Calu3 (cell line): ENCODE measurements at regions of chr5 and their contacts with region 1.

Region 1: DNA sequence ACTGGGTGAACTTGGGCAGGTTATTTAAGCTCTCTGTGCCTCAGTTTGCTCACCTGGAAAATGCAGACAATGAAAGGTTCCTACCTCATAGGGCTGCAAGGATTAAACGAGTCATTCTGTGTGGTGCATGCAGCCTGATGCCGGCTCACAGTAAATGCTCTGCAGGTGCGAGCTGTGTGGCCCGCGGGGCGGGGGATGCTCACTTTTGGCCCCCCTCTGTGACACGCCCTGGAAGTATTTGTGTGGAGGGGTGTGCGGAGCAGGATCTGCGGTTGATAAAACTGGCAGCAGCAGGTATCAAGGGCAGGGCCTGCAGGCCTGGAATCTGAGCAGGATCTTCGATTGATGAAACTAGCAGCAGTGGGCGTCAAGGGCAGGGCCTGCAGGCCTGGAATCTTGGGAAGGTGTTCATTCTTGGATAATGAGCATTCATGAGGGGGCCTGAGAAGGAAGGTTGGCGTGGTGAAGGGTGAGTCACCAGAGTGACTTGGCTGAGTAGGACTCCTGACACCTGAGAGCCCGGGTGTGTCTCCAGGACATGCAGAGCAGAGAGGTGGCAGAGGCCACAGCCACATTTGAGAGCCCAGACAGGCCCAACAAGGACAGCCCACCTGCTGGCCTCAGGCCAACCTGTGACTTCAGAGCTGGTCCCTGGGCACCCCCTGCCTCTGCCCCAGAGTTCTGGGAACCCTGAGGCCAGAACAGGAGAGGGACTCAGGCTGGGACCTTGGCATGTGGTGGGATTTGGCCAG is 11.9 kb downstream of the UNC5A start:
- DNase-seq: peak; percentile 95
- H3K4me3 Mint-ChIP-seq: peak overlapping the region; percentile 86
- H3K27ac Mint-ChIP-seq: peak overlapping the region; percentile 97
- H3K4me1 Mint-ChIP-seq: peaks cover 77% of the 10 kb centered on the region
- H3K27me3 Mint-ChIP-seq: no peaks in the 10 kb centered on the region
- CTCF ChIP-seq: no peak

Region 2: GRCh38 chr5:176810084-176810597 is 12.1 kb before region 1 on chr5 and contains the start of gene UNC5A:
- CTCF ChIA-PET with region 1: interaction called, 18 read pairs
- intact Hi-C with region 1: no loop called
- DNase-seq: peak; percentile 90
- H3K4me3 Mint-ChIP-seq: peak within 1 kb of the TSS; percentile 79
- H3K27ac Mint-ChIP-seq: peak within 1 kb of the TSS; percentile 43
- H3K4me1 Mint-ChIP-seq: peaks cover 42% of the 10 kb centered on the region
- H3K27me3 Mint-ChIP-seq: no peaks in the 10 kb centered on the region
- CTCF ChIP-seq: no peak
- total RNA-seq, gene UNC5A: 19.5 and 20.2 TPM in 2 replicates

Region 3: DNA sequence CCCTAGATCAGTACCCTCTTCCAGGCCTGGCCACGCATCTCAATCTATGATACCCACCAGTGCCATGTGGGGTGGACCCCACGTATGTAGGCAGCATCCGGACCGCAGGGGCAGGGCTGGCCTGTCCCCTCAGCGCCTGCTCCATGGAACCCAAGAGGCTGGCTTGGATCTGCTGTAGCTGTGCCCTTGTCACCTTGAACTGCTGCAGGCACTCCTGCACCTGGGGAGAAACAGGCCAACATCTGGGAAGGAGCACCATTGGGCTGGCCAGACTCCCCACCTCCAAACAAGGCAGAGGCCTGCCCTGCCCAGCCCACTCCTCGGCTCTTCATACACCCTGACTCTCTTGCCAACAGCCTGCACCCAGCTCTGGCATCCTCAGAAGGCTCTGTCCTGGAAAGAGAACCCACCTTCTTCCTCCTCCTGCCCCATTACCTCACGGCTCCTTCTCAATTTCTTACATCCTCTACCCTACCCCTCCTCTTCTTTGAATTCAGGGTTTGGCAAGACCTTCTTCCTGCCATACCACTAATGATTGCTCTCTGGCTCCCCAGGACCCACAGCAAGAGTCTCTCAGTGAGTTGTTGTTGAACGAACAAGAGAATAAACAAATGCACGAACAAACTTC is 69.2 kb after region 1 on chr5:
- CTCF ChIA-PET with region 1: no interaction called
- intact Hi-C with region 1: no loop called
- DNase-seq: no peak
- H3K4me3 Mint-ChIP-seq: no peak overlapping the region
- H3K27ac Mint-ChIP-seq: no peak overlapping the region
- H3K4me1 Mint-ChIP-seq: no peaks in the 10 kb centered on the region
- H3K27me3 Mint-ChIP-seq: peaks cover 46% of the 10 kb centered on the region
- CTCF ChIP-seq: no peak

Region 4: GRCh38 chr5:176901260-176902101 is 79.3 kb after region 1 on chr5:
- CTCF ChIA-PET with region 1: interaction called, 7 read pairs
- intact Hi-C with region 1: loop called (anchors 5 kb)
- DNase-seq: no peak
- H3K4me3 Mint-ChIP-seq: no peak overlapping the region
- H3K27ac Mint-ChIP-seq: no peak overlapping the region
- H3K4me1 Mint-ChIP-seq: peaks cover 44% of the 10 kb centered on the region
- H3K27me3 Mint-ChIP-seq: no peaks in the 10 kb centered on the region
- CTCF ChIP-seq: no peak